ENCODE measurements at regions of chr2 and their contacts with region 1.

Region 1: DNA sequence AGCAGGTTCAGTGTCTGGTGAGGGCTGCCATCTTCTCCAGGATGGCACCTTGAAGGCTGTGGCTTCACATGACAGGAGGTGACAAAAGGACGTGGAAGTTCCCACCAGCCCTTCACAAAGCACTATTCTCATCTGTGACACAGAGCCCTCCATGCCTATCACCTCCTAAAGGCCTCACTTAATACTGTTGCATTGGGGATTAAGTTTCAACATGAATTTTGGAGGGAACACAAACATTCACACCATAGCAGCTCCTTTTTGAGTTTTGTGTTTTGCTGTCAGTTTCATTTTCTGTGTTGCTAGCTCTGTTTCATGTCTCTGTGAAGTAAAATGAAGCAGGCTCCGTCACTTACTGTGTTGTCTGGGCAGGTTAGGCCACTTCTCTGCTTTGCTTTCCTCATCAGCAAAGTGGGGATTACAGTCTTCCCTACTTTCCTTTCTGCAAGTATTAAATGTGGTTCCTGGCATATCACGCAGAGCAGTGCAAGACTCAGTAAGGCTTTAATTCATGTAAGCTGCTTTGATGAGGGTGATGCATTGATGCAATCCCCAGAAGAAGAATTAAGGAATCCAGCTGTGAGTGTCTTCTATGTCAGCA is 31.6 kb downstream of the LIMS1 start:
- DNase-seq: no peak
- H3K4me3 ChIP-seq: no peak overlapping the region
- H3K4me3 Mint-ChIP-seq: no peak overlapping the region
- H3K27ac Mint-ChIP-seq: no peak overlapping the region
- H3K4me1 ChIP-seq: no peaks in the 10 kb centered on the region
- H3K4me1 Mint-ChIP-seq: peaks cover 9% of the 10 kb centered on the region
- H3K27me3 ChIP-seq: no peaks in the 10 kb centered on the region
- H3K27me3 Mint-ChIP-seq: no peaks in the 10 kb centered on the region
- CTCF ChIP-seq: no peak

Region 2: GRCh38 chr2:108492364-108492763 is 73.5 kb before region 1 on chr2:
- CTCF ChIA-PET with region 1: no interaction called
- POLR2A ChIA-PET with region 1: no interaction called
- intact Hi-C with region 1: no loop called
- DNase-seq: peak in 1 of 2 experiments; percentile 30
- H3K4me3 ChIP-seq: no peak overlapping the region
- H3K4me3 Mint-ChIP-seq: peak overlapping the region; percentile 27
- H3K27ac Mint-ChIP-seq: peak overlapping the region; percentile 82
- H3K4me1 ChIP-seq: peaks cover 19% of the 10 kb centered on the region
- H3K4me1 Mint-ChIP-seq: peaks cover 17% of the 10 kb centered on the region
- H3K27me3 ChIP-seq: no peaks in the 10 kb centered on the region
- H3K27me3 Mint-ChIP-seq: no peaks in the 10 kb centered on the region
- CTCF ChIP-seq: no peak

Region 3: GRCh38 chr2:108533832-108534583 is 31.9 kb before region 1 on chr2 and contains the start of gene LIMS1:
- CTCF ChIA-PET with region 1: no interaction called
- POLR2A ChIA-PET with region 1: no interaction called
- intact Hi-C with region 1: loop called (anchors 2 kb)
- DNase-seq: peak; percentile 92
- H3K4me3 ChIP-seq: peak within 1 kb of the TSS; percentile 95
- H3K4me3 Mint-ChIP-seq: peak within 1 kb of the TSS; percentile 84
- H3K27ac Mint-ChIP-seq: peak within 1 kb of the TSS; percentile 91
- H3K4me1 ChIP-seq: peaks cover 45% of the 10 kb centered on the region
- H3K4me1 Mint-ChIP-seq: peaks cover 30% of the 10 kb centered on the region
- H3K27me3 ChIP-seq: no peaks in the 10 kb centered on the region
- H3K27me3 Mint-ChIP-seq: no peaks in the 10 kb centered on the region
- CTCF ChIP-seq: no peak
- total RNA-seq, gene LIMS1: 67.2 and 75.2 TPM in 2 replicates